ENCODE measurements at regions of chr1 and their contacts with region 1.

Region 1: DNA sequence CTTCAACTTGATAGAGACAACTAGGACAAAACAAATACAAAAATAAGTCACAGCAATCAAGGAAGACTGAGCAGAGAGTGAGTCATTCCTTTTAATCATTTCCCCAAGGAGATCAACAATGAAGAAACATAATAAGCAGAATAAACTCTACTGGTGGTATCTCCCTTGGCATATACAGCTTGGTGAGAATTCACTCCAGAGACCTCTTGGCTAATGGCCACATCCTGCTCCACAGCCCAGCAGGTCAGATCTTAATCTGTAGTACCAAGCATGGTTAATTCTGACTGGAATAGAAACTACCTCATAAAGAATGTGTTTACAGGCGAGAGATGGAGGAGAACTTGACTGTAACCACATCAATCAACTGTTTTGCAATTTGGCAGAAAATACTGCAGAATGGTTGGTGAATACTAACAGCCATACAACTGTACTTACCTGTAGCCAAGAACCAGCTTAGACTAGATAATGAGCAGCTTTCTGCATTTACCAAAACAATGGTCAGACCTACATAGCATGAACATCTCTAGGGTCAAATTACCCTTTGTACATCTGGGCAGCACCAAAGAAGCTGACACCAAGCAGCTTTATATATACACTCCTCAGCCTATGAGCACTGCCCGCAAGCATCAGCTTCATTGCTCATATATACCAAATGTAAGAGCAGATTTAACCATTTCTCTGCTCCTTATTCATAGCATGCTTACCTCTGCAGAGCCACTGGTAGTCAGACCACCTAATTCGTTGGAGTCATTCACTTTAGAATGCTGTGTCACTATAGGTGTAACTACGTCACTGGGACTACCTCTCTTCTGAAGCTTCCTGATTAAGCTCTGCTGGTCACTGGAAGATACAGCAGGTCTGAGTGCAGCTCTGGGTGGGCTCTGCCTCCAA is 51.0 kb downstream of the KIAA0319L start:
- DNase-seq: peak; percentile 70
- H3K4me3 Mint-ChIP-seq: peak overlapping the region; percentile 69
- H3K27ac Mint-ChIP-seq: peak overlapping the region; percentile 94
- H3K4me1 Mint-ChIP-seq: peaks cover 76% of the 10 kb centered on the region
- H3K27me3 Mint-ChIP-seq: no peaks in the 10 kb centered on the region

Region 2: GRCh38 chr1:35470977-35471613 is 35.1 kb before region 1 on chr1:
- intact Hi-C with region 1: loop called (anchors 5 kb)
- DNase-seq: no peak
- H3K4me3 Mint-ChIP-seq: no peak overlapping the region
- H3K27ac Mint-ChIP-seq: no peak overlapping the region
- H3K4me1 Mint-ChIP-seq: peaks cover 13% of the 10 kb centered on the region
- H3K27me3 Mint-ChIP-seq: no peaks in the 10 kb centered on the region

Region 3: DNA sequence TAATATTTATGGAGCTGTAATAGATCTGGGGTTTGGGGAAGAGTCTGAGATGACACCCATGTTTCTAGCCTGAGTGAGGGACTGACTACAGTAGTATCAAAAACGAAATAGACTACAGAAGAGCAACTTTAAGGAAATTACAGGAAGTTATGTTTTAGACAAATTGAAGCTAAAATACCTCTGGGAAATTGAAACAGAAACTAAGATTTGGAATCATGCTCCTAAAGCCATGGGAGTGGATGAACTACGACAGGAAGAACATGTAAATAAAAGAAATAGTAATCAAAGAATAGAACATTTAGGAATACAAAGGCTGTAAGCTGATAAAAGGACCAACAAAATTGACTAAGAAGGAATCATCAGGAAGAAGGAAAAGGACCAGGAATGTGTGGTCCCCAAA is 17.8 kb before region 1 on chr1:
- intact Hi-C with region 1: no loop called
- DNase-seq: no peak
- H3K4me3 Mint-ChIP-seq: peak overlapping the region; percentile 56
- H3K27ac Mint-ChIP-seq: no peak overlapping the region
- H3K4me1 Mint-ChIP-seq: peaks cover 15% of the 10 kb centered on the region
- H3K27me3 Mint-ChIP-seq: no peaks in the 10 kb centered on the region

Region 4: DNA sequence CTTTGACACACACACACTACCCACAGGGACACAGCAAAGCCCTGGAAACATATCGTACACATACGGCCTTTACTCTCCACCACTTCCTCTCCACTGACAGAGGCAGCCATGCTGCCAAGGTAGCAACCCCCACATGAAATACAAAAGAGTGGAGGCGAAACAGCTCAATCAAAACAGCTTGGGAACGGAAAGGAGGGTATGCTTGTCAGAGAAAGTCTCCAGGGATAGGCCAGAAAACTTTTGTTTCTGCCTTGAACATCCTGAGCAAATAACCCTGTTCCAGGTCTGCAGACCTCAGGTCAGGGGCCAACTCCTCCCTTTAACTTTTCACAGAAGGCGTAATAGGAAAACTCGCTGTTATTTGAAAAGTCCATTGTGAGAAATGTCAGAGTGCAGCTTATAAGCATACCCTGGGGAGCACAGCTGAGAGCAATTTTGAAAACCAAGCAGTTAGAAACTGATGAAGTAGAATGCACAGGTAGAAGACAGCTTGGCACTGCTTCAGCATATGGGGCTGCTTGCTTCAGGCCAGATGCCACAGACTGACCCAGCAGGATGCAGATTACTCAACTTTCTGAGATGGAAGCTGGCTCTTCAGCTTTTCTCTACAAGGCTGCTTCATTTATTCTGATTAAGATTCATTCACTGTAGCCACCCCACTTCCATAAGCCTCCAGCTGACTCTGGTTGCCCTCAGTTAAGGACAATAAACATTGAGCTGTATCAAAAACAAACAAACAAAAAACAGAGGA is 33.1 kb after region 1 on chr1:
- intact Hi-C with region 1: loop called (anchors 1 kb)
- DNase-seq: peak; percentile 46
- H3K4me3 Mint-ChIP-seq: peak overlapping the region; percentile 53
- H3K27ac Mint-ChIP-seq: peak overlapping the region; percentile 85
- H3K4me1 Mint-ChIP-seq: peaks cover 80% of the 10 kb centered on the region
- H3K27me3 Mint-ChIP-seq: no peaks in the 10 kb centered on the region